Sciatic nerve (tissue), 2 donors: ENCODE measurements at regions of chr4 and their contacts with region 1.

Region 1: DNA sequence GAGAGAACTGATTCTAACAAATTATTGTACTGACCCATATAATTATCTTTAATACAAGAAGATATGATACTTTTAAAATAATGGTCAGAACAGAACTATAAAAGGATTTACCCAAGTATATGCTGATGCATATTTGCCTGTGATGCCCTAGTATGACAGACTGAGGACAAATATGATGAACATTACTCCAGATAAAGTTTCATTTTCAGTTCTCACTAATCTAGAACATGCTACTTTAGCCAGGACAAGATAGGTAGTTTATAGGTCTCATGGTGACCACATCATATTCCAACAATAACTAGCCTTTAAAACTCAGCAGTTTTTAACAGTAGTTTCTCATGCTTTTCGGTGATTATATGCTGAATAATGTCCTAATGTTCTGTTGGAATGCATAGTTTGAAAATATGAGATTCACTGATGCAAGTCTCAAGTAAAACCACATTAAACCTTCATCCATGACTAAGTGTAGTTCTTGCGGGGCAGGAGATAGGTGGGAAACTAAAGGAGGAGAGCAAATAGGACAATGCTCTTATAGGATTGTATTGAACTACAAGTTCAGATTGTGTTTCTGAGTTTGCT is 295.2 kb upstream of the AGA start:
- DNase-seq: no peak
- ATAC-seq: no peak

Region 2: GRCh38 chr4:177671387-177671786 is 66.1 kb before region 1 on chr4:
- intact Hi-C with region 1: loop called (anchors 2 kb)
- DNase-seq: no peak
- ATAC-seq: no peak